ENCODE measurements at regions of chr1 and their contacts with region 1.

Region 1: GRCh38 chr1:228457396-228458176 is 29.6 kb upstream of the RNF187 start:
- DNase-seq: peak; percentile 68 to 98 (median 80)
- ATAC-seq: peak; percentile 85
- H3K4me3 ChIP-seq: peak overlapping the region; percentile 69 to 91
- H3K4me3 Mint-ChIP-seq: peak overlapping the region; percentile 93
- H3K27ac ChIP-seq: peak overlapping the region; percentile 91 to 93
- H3K27ac Mint-ChIP-seq: peak overlapping the region; percentile 99
- H3K4me1 ChIP-seq: peaks cover 23% of the 10 kb centered on the region
- H3K4me1 Mint-ChIP-seq: peaks cover 39% of the 10 kb centered on the region
- H3K27me3 ChIP-seq: no peaks in the 10 kb centered on the region
- H3K27me3 Mint-ChIP-seq: peaks cover 4% of the 10 kb centered on the region
- CTCF ChIP-seq: peak; percentile 31

Region 2: GRCh38 chr1:228109073-228109961 is 348.3 kb before region 1 on chr1 and contains the start of gene MRPL55:
- CTCF ChIA-PET with region 1: no interaction called
- POLR2A ChIA-PET with region 1: no interaction called
- intact Hi-C with region 1: loop called in 1 of 2 experiments (anchors 1 kb)
- DNase-seq: peak; percentile 97 to 100 (median 98)
- ATAC-seq: peak; percentile 97
- H3K4me3 ChIP-seq: peak within 1 kb of the TSS; percentile 93 to 98
- H3K4me3 Mint-ChIP-seq: peak within 1 kb of the TSS; percentile 95
- H3K27ac ChIP-seq: peak within 1 kb of the TSS; percentile 90 to 94
- H3K27ac Mint-ChIP-seq: peak within 1 kb of the TSS; percentile 96
- H3K4me1 ChIP-seq: peaks cover 21% of the 10 kb centered on the region
- H3K4me1 Mint-ChIP-seq: peaks cover 26% of the 10 kb centered on the region
- H3K27me3 ChIP-seq: no peaks in the 10 kb centered on the region
- H3K27me3 Mint-ChIP-seq: no peaks in the 10 kb centered on the region
- CTCF ChIP-seq: no peak
- total RNA-seq, gene MRPL55: 90.2 to 90.7 TPM

Region 3: GRCh38 chr1:228393248-228393699 is 64.3 kb before region 1 on chr1:
- CTCF ChIA-PET with region 1: no interaction called
- POLR2A ChIA-PET with region 1: no interaction called
- intact Hi-C with region 1: no loop called
- DNase-seq: peak in 1 of 9 experiments; percentile 22
- ATAC-seq: no peak
- H3K4me3 ChIP-seq: no peak overlapping the region
- H3K4me3 Mint-ChIP-seq: no peak overlapping the region
- H3K27ac ChIP-seq: no peak overlapping the region
- H3K27ac Mint-ChIP-seq: peak overlapping the region; percentile 37
- H3K4me1 ChIP-seq: no peaks in the 10 kb centered on the region
- H3K4me1 Mint-ChIP-seq: peaks cover 8% of the 10 kb centered on the region
- H3K27me3 ChIP-seq: no peaks in the 10 kb centered on the region
- H3K27me3 Mint-ChIP-seq: no peaks in the 10 kb centered on the region
- CTCF ChIP-seq: no peak

Region 4: DNA sequence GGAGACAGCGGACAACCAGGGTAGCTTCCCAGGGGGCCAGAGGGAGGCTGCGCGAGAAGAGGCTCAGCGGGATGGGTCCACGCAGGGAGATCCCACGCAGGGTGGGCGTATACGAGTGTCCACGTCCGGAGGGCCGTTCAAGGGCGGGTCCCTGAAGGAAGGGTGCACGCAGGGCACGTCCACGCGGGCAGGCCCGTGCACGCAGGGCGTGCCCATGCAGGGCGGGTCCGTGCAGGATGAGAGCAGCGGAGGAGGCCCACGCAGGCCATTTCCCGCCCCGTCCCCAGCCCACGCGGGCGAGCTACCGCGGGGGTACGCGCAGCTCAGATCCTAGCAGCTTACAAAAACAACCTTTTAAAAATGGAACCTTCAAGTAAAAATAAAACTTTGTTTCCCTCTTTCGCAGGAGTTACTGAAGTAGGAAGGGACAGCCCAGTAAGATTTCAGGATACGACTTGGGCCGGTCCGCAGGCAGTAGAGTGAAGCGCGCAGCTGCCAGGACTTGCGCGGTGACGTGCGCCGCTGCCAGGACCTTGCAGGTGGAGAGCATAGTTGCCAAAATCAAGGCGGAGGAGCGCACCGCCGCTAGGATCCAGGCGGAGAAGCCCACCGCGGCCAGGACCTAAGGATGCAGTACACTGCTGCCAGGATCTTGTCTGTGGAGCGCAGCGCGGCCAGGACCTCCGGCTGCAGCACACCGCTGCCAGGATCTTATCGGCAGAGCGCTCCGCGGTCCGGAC is 29.2 kb after region 1 on chr1:
- CTCF ChIA-PET with region 1: interaction called, 10 read pairs
- POLR2A ChIA-PET with region 1: interaction called, 38 read pairs
- intact Hi-C with region 1: loop called (anchors 1 kb)
- DNase-seq: peak; percentile 66 to 94 (median 77)
- ATAC-seq: peak; percentile 75
- H3K4me3 ChIP-seq: peak overlapping the region; percentile 88 to 90
- H3K4me3 Mint-ChIP-seq: peak overlapping the region; percentile 98
- H3K27ac ChIP-seq: peak overlapping the region; percentile 100
- H3K27ac Mint-ChIP-seq: peak overlapping the region; percentile 100
- H3K4me1 ChIP-seq: peaks cover 31% of the 10 kb centered on the region
- H3K4me1 Mint-ChIP-seq: peaks cover 37% of the 10 kb centered on the region
- H3K27me3 ChIP-seq: no peaks in the 10 kb centered on the region
- H3K27me3 Mint-ChIP-seq: no peaks in the 10 kb centered on the region
- CTCF ChIP-seq: no peak

Region 5: DNA sequence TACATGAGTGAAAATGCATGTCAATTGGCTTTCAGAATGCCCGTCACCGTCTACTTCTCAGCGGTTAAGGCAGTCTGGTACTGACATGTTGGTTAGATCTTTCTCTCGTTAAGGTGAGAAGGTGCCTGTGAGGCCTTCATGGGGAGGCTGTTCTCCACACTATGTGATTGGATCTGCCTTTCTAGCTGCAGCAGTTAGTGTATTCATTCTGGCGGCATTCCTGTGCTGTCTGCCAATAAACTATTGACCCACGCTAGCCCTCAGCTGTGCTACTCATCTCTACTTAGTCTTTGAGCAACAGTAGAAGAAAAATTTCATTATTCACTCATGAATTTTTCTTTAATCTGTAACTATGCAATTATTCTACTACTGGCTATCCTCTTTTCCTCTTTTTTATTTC is 853.2 kb after region 1 on chr1:
- CTCF ChIA-PET with region 1: no interaction called
- POLR2A ChIA-PET with region 1: no interaction called
- intact Hi-C with region 1: no loop called
- DNase-seq: no peak
- ATAC-seq: no peak
- H3K4me3 ChIP-seq: no peak overlapping the region
- H3K4me3 Mint-ChIP-seq: no peak overlapping the region
- H3K27ac ChIP-seq: no peak overlapping the region
- H3K27ac Mint-ChIP-seq: no peak overlapping the region
- H3K4me1 ChIP-seq: no peaks in the 10 kb centered on the region
- H3K4me1 Mint-ChIP-seq: no peaks in the 10 kb centered on the region
- H3K27me3 ChIP-seq: no peaks in the 10 kb centered on the region
- H3K27me3 Mint-ChIP-seq: no peaks in the 10 kb centered on the region
- CTCF ChIP-seq: no peak

Measured in CD8-positive, alpha-beta T cell (primary cell).